Activated CD4-positive, alpha-beta T cell treated with anti-CD3 and anti-CD28 coated beads, Interleukin-2, amount 10 ng/mL, durations not matched to agents 24 days and 14 days (primary cell): ENCODE measurements at regions of chr10 and their contacts with region 1.

Region 1: DNA sequence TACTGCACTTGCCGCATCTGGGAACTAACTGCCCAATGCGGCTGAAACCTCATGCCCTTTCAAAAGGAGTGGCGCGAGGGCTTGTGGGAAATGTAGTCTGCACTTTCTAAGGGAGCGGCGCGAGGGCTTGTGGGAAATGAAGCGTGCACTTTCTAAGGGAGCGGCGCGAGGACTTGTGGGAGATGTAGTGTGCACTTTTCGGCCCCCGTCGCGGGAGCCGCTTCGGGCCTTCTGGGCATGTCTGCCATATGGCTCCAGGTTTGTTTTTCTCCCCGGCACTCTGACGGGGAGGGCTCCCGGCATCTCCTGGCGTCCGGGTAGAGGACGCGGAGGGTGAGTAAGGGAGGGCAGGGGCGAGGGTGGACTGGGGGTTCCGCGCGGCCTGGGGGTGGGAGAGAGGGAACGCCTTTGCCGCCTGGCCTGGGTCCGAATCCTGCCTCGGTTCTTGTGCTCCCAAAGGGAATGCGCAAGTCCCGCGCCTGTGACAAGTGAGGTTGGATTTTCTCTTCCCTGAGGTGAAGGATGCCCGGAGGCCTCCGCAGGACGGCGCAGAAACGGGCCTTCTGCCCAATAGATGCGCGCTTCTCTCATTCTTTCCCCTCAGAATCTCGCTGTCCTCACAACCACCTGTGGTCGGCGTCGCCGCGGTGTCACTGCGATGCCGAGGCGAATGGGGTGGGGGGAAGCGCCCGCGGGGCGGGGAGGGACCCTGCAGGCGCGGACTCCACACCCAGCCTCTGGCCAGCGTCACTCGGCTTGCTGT is at the start of gene ZNF37A:
- DNase-seq: peak; percentile 96
- H3K4me3 Mint-ChIP-seq: peak within 1 kb of the TSS; percentile 88
- H3K27ac Mint-ChIP-seq: peak within 1 kb of the TSS; percentile 95
- H3K4me1 Mint-ChIP-seq: peaks cover 25% of the 10 kb centered on the region
- H3K27me3 Mint-ChIP-seq: no peaks in the 10 kb centered on the region
- total RNA-seq, gene ZNF37A: 29.7 and 33.5 TPM in 2 replicates

Region 2: GRCh38 chr10:37857287-37858211 is 236.8 kb before region 1 on chr10 and contains the start of gene ZNF248:
- intact Hi-C with region 1: loop called (anchors 1 kb)
- DNase-seq: peak; percentile 99
- H3K4me3 Mint-ChIP-seq: peak within 1 kb of the TSS; percentile 89
- H3K27ac Mint-ChIP-seq: peak within 1 kb of the TSS; percentile 85
- H3K4me1 Mint-ChIP-seq: peaks cover 27% of the 10 kb centered on the region
- H3K27me3 Mint-ChIP-seq: no peaks in the 10 kb centered on the region
- total RNA-seq, gene ZNF248: 7.9 and 9.3 TPM in 2 replicates

Region 3: GRCh38 chr10:37976091-37976879 is 118.1 kb before region 1 on chr10 and contains the start of gene ZNF25:
- intact Hi-C with region 1: loop called (anchors 1 kb)
- DNase-seq: peak; percentile 98
- H3K4me3 Mint-ChIP-seq: peak within 1 kb of the TSS; percentile 95
- H3K27ac Mint-ChIP-seq: peak within 1 kb of the TSS; percentile 98
- H3K4me1 Mint-ChIP-seq: peaks cover 23% of the 10 kb centered on the region
- H3K27me3 Mint-ChIP-seq: no peaks in the 10 kb centered on the region
- total RNA-seq, gene ZNF25: 7.6 and 7.9 TPM in 2 replicates

Region 4: GRCh38 chr10:38010119-38010903 is 84.0 kb before region 1 on chr10 and contains the start of gene ZNF33A:
- intact Hi-C with region 1: loop called (anchors 1 kb)
- DNase-seq: peak; percentile 97
- H3K4me3 Mint-ChIP-seq: peak within 1 kb of the TSS; percentile 87
- H3K27ac Mint-ChIP-seq: peak within 1 kb of the TSS; percentile 99
- H3K4me1 Mint-ChIP-seq: peaks cover 20% of the 10 kb centered on the region
- H3K27me3 Mint-ChIP-seq: no peaks in the 10 kb centered on the region
- total RNA-seq, gene ZNF33A: 17.8 and 19.0 TPM in 2 replicates

Region 5: GRCh38 chr10:38038107-38038931 is 56.0 kb before region 1 on chr10:
- intact Hi-C with region 1: loop called (anchors 5 kb)
- DNase-seq: no peak
- H3K4me3 Mint-ChIP-seq: peak overlapping the region; percentile 91
- H3K27ac Mint-ChIP-seq: peak overlapping the region; percentile 96
- H3K4me1 Mint-ChIP-seq: peaks cover 18% of the 10 kb centered on the region
- H3K27me3 Mint-ChIP-seq: no peaks in the 10 kb centered on the region

Region 6: DNA sequence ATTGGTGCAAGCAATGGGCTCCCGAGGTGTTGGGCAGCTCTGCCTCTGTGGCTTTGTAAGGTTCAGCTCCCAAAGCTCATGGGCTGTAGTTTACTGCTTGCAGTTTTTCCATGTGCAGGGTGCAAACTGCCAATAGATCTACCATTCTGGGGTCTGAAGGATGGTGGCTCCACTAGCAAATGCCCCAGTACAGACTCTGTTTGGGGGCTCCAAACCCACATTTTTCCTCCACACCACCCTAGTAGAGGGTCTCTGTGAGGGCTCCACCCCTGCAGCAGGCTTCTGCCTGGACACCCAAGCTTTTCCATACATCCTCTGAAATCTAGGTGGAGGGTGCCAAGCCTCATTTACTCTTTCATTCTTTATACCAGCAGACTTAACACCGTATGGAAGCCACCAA is 17.7 kb before region 1 on chr10:
- intact Hi-C with region 1: no loop called
- DNase-seq: no peak
- H3K4me3 Mint-ChIP-seq: no peak overlapping the region
- H3K27ac Mint-ChIP-seq: no peak overlapping the region
- H3K4me1 Mint-ChIP-seq: no peaks in the 10 kb centered on the region
- H3K27me3 Mint-ChIP-seq: no peaks in the 10 kb centered on the region